ENCODE measurements at regions of chr7 and their contacts with region 1.

Region 1: DNA sequence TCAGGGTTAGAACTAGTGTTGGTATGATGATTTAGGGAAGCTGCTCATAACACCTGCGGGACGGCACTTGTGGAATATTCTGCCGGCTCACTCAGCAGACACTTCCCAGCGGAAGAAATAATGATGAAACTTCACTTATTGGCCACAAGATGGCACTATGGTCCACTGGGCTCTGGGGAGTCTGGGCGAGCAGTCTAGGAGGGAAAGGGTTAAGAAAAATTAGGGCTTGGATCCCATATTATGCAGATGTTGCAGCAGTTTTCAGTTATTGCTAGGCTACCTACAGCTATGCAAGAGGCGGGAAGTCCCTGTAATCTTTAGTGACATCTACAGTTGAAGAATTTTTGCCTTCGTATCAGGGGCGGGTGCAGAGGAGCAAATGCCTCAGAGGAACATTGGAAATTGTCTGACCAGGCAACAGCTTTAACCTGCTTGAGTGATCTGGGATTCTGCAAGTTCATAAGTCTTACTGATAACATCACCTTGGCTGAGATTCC is 238.7 kb upstream of the PRSS58 start:
- DNase-seq: peak; percentile 46
- H3K4me3 ChIP-seq: no peak overlapping the region
- H3K27ac ChIP-seq: no peak overlapping the region
- H3K4me1 ChIP-seq: peaks cover 22% of the 10 kb centered on the region
- H3K27me3 ChIP-seq: no peaks in the 10 kb centered on the region
- CTCF ChIP-seq: peak; percentile 67 to 74

Region 2: DNA sequence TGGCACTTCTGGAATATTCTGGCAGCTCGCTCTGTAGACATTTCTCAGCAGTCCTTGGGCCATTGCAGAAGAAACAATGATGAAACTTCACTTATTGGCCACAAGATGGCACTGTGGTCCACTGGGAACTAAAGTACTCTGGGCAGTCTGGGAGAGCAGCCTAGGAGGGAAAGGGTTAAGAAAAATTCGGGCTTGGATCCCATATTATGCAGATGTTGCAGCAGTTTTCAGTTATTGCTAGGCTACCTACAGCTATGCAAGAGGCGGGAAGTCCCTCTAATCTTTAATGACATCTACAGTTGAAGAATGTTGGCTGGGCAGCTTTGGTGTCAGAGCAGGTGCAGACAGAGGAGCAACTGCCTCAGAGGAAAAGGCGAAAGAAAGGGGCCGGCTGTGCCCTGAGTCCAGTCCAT is 37.0 kb before region 1 on chr7:
- CTCF ChIA-PET with region 1: no interaction called
- dilution Hi-C with region 1: no loop called
- in situ Hi-C with region 1: no loop called
- intact Hi-C with region 1: loop called (anchors 5 kb)
- DNase-seq: peak; percentile 67
- H3K4me3 ChIP-seq: no peak overlapping the region
- H3K27ac ChIP-seq: no peak overlapping the region
- H3K4me1 ChIP-seq: peaks cover 19% of the 10 kb centered on the region
- H3K27me3 ChIP-seq: no peaks in the 10 kb centered on the region
- CTCF ChIP-seq: peak; percentile 70 to 77

Region 3: DNA sequence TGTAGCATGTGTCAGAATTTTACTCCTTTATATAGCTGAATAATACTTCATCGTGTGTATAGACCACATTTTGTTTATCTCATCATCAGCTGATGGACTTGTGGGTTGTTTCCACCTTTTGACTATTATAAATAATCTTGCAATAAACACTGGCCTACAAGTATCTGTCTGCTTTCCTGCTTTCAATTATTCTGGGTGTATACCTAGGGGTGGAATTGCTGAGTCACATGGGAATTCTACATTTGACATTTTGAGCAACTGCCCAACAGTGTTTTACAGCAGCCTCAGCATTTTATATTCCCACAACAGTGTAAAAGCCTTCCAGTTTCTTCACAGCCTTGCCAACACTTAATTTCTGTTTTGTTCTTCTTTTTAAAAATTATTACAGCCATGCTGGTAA is 52.4 kb after region 1 on chr7:
- CTCF ChIA-PET with region 1: no interaction called
- dilution Hi-C with region 1: no loop called
- in situ Hi-C with region 1: no loop called
- intact Hi-C with region 1: no loop called
- DNase-seq: peak; percentile 43
- H3K4me3 ChIP-seq: no peak overlapping the region
- H3K27ac ChIP-seq: no peak overlapping the region
- H3K4me1 ChIP-seq: peaks cover 9% of the 10 kb centered on the region
- H3K27me3 ChIP-seq: no peaks in the 10 kb centered on the region
- CTCF ChIP-seq: no peak